ENCODE measurements at regions of chr3 and their contacts with region 1.

Region 1: GRCh38 chr3:184145111-184145524 is 10.0 kb downstream of the EIF2B5 start:
- DNase-seq: peak in 4 of 5 donors; percentile 25 to 30 (median 28)
- H3K4me3 ChIP-seq: no peak overlapping the region
- H3K4me3 Mint-ChIP-seq: no peak overlapping the region
- H3K27ac ChIP-seq: no peak overlapping the region
- H3K27ac Mint-ChIP-seq: peak overlapping the region in 1 of 7 donors; percentile 25
- H3K4me1 ChIP-seq: no peaks in the 10 kb centered on the region
- H3K4me1 Mint-ChIP-seq: no peaks in the 10 kb centered on the region
- H3K27me3 ChIP-seq: no peaks in the 10 kb centered on the region
- H3K27me3 Mint-ChIP-seq: no peaks in the 10 kb centered on the region

Region 2: DNA sequence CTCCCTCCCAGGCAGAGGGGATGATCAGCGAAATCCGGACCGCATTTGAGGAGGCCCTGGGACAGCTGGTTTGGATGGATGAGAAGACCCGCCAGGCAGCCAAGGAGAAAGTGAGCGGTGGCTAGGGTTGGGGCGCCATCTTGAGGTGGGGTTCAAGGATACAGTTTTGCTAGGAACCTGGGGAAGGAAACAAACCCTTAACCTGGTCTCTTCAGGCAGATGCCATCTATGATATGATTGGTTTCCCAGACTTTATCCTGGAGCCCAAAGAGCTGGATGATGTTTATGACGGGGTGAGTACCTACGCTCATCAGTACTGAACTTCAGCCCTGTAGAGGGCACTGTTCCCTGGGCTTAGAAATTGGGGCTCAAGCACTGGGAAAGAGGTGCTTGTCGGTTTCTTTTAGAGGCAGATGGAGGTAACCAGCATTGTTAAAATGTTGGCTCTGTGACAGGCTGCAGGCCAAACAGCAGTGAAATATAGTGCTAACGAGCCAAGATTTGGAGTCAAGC is 144.4 kb after region 1 on chr3:
- CTCF ChIA-PET with region 1: interaction called, 5 read pairs
- POLR2A ChIA-PET with region 1: no interaction called
- intact Hi-C with region 1: loop called (anchors 1 kb)
- DNase-seq: peak; percentile 40 to 57 (median 48)
- H3K4me3 ChIP-seq: no peak overlapping the region
- H3K4me3 Mint-ChIP-seq: no peak overlapping the region
- H3K27ac ChIP-seq: no peak overlapping the region
- H3K27ac Mint-ChIP-seq: peak overlapping the region in 1 of 7 donors; percentile 57
- H3K4me1 ChIP-seq: no peaks in the 10 kb centered on the region
- H3K4me1 Mint-ChIP-seq: peaks cover 0 to 2% (median 0%) of the 10 kb centered on the region in 4 donors
- H3K27me3 ChIP-seq: peaks cover 3% of the 10 kb centered on the region
- H3K27me3 Mint-ChIP-seq: peaks cover 5 to 16% of the 10 kb centered on the region in 2 donors

Measured in CD4-positive, alpha-beta memory T cell (primary cell).